H1 (cell line): ENCODE measurements at regions of chr3 and their contacts with region 1.

Region 1: GRCh38 chr3:128095222-128095703 is 28.3 kb downstream of the RUVBL1 start:
- DNase-seq: peak; percentile 63 to 86
- H3K4me3 ChIP-seq: peak overlapping the region in 1 of 4 experiments; percentile 17; a peak in 1 of 8 replicates
- H3K27ac ChIP-seq: no peak overlapping the region
- H3K4me1 ChIP-seq: peaks cover 9 to 30% (median 19%) of the 10 kb centered on the region in 4 experiments
- H3K27me3 ChIP-seq: no peaks in the 10 kb centered on the region
- CTCF ChIP-seq: peak; percentile 61 to 74 (median 64)
- EP300 ChIP-seq: no peak
- POLR2A ChIP-seq: no peak
- RAD21 ChIP-seq: peak; percentile 76 to 78

Region 2: GRCh38 chr3:128084391-128084963 is 10.8 kb before region 1 on chr3:
- CTCF ChIA-PET with region 1: interaction called, 27 read pairs
- POLR2A ChIA-PET with region 1: interaction called, 4 read pairs
- DNase-seq: no peak
- H3K4me3 ChIP-seq: no peak overlapping the region
- H3K27ac ChIP-seq: no peak overlapping the region
- H3K4me1 ChIP-seq: no peaks in the 10 kb centered on the region
- H3K27me3 ChIP-seq: no peaks in the 10 kb centered on the region
- CTCF ChIP-seq: no peak
- EP300 ChIP-seq: no peak
- POLR2A ChIP-seq: no peak
- RAD21 ChIP-seq: no peak

Region 3: GRCh38 chr3:128123538-128124368 is 28.5 kb after region 1 on chr3 and contains the start of gene RUVBL1:
- CTCF ChIA-PET with region 1: interaction called, 8 read pairs
- POLR2A ChIA-PET with region 1: interaction called, 10 read pairs
- DNase-seq: peak; percentile 90 to 94
- H3K4me3 ChIP-seq: peak within 1 kb of the TSS; percentile 93 to 96 (median 95)
- H3K27ac ChIP-seq: peak within 1 kb of the TSS; percentile 95
- H3K4me1 ChIP-seq: no peaks in the 10 kb centered on the region; a peak in 2 of 7 replicates
- H3K27me3 ChIP-seq: peaks cover 0 to 4% (median 0%) of the 10 kb centered on the region in 4 experiments; a peak in 1 of 7 replicates
- CTCF ChIP-seq: no peak
- EP300 ChIP-seq: no peak
- POLR2A ChIP-seq: peak; percentile 85 to 90
- RAD21 ChIP-seq: no peak
- total RNA-seq, gene RUVBL1: 131 and 135 TPM in 2 replicates

Region 4: GRCh38 chr3:128523591-128523990 is 428.3 kb after region 1 on chr3:
- CTCF ChIA-PET with region 1: no interaction called
- POLR2A ChIA-PET with region 1: no interaction called
- DNase-seq: no peak
- H3K4me3 ChIP-seq: no peak overlapping the region
- H3K27ac ChIP-seq: no peak overlapping the region
- H3K4me1 ChIP-seq: no peaks in the 10 kb centered on the region; a peak in 1 of 7 replicates
- H3K27me3 ChIP-seq: no peaks in the 10 kb centered on the region
- CTCF ChIP-seq: no peak
- EP300 ChIP-seq: no peak
- POLR2A ChIP-seq: no peak
- RAD21 ChIP-seq: no peak